Dendritic cell treated with granulocyte-macrophage colony-stimulating factor and Interleukin-4, amounts not matched to agents 40 ng/mL and 50 ng/mL, for 4 days (primary cell): ENCODE measurements at regions of chr2 and their contacts with region 1.

Region 1: GRCh38 chr2:37635504-37636380 is 35.7 kb downstream of the CDC42EP3 start:
- H3K4me3 Mint-ChIP-seq: no peak overlapping the region
- H3K27ac Mint-ChIP-seq: peak overlapping the region; percentile 71
- H3K4me1 Mint-ChIP-seq: peaks cover 51% of the 10 kb centered on the region
- H3K27me3 Mint-ChIP-seq: peaks cover 3% of the 10 kb centered on the region

Region 2: DNA sequence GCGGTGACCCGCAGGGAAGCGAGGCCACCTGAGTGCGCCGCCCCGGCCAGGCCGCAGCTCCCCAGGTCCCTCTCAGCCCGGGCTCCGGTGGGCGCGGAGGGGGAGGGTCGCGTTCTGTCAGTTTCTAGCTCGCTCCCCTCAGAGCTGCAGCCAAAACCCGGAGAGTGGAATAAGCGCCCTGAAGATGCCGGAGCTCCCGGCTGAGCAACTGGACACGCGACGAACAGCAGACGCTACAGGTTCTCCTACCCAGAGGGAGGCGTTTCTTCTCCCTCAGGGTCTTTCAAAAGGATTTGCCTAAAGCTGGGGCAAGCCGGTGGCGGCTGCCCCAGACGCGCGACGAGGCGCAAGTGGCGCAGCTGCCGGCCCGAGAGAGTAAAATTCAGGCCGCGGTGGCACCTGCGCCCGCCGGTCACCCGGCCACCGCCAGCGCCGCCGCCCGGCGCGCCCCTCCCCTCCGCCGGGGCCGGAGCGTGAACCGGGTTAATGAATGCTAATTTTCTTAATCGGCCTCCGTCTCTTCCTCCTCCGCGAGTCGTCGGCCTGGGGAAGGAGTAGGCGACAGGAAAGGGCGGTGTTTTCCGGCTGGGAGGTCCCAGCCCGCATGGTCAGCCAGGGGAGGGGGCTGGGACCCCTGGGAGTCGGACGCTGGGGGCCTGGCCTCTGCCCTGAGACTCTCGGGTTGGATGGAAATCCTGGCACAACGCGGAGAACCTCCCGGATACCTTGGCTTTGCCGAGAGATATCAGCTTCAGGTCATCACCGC is 36.5 kb after region 1 on chr2:
- intact Hi-C with region 1: loop called (anchors 5 kb)
- H3K4me3 Mint-ChIP-seq: peak overlapping the region; percentile 91
- H3K27ac Mint-ChIP-seq: peak overlapping the region; percentile 89
- H3K4me1 Mint-ChIP-seq: peaks cover 39% of the 10 kb centered on the region
- H3K27me3 Mint-ChIP-seq: no peaks in the 10 kb centered on the region

Region 3: GRCh38 chr2:37819186-37819585 is 183.4 kb after region 1 on chr2:
- intact Hi-C with region 1: no loop called
- H3K4me3 Mint-ChIP-seq: no peak overlapping the region
- H3K27ac Mint-ChIP-seq: no peak overlapping the region
- H3K4me1 Mint-ChIP-seq: peaks cover 45% of the 10 kb centered on the region
- H3K27me3 Mint-ChIP-seq: no peaks in the 10 kb centered on the region